Activated CD4-positive, alpha-beta memory T cell treated with anti-CD3 and anti-CD28 coated beads, Interleukin-2, amount 10 ng/mL, durations not matched to agents 7 days and 5 days (primary cell): ENCODE measurements at regions of chr22 and their contacts with region 1.

Region 1: DNA sequence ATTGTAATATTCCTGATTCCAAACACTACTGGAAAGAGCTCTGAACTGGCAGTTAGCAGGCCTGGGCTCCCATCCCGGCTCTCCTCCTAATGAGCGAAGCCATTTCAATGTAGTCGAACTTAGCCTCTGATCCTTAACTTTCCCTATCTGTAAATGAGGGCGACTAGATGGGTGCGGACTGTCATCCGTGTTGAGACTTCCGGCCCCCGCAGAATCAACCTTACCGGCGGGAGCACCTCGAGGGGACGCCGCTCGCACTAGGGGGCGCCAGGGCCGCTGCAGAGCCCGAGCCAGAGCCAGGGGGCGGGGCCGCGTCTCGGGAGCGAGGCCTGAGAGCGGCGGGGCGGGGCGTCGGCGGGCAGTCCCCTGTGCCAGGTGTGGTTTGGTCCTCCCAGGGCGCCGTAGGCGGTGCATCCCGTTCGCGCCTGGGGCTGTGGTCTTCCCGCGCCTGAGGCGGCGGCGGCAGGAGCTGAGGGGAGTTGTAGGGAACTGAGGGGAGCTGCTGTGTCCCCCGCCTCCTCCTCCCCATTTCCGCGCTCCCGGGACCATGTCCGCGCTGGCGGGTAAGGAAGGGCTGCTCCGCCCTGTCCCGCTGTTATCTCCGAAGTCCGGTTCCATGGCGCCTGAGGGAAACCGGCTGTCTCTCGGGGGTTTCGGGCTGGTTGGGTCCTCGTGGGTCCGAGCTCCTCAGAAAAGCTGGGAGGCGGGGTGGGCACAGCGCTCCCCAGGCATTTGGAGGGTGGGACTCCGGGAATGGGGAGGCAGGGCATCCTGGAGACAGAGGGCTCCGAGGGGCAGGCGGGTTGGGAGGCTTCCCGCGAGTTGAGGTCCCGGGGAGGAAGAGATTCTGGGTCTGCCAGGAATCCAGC is at the start of gene LIMK2:
- DNase-seq: peak; percentile 98
- H3K4me3 Mint-ChIP-seq: peak within 1 kb of the TSS; percentile 82
- H3K27ac Mint-ChIP-seq: peak within 1 kb of the TSS; percentile 87
- H3K4me1 Mint-ChIP-seq: peaks cover 55% of the 10 kb centered on the region
- H3K27me3 Mint-ChIP-seq: no peaks in the 10 kb centered on the region
- total RNA-seq, gene LIMK2: 44.0 to 46.4 TPM

Region 2: DNA sequence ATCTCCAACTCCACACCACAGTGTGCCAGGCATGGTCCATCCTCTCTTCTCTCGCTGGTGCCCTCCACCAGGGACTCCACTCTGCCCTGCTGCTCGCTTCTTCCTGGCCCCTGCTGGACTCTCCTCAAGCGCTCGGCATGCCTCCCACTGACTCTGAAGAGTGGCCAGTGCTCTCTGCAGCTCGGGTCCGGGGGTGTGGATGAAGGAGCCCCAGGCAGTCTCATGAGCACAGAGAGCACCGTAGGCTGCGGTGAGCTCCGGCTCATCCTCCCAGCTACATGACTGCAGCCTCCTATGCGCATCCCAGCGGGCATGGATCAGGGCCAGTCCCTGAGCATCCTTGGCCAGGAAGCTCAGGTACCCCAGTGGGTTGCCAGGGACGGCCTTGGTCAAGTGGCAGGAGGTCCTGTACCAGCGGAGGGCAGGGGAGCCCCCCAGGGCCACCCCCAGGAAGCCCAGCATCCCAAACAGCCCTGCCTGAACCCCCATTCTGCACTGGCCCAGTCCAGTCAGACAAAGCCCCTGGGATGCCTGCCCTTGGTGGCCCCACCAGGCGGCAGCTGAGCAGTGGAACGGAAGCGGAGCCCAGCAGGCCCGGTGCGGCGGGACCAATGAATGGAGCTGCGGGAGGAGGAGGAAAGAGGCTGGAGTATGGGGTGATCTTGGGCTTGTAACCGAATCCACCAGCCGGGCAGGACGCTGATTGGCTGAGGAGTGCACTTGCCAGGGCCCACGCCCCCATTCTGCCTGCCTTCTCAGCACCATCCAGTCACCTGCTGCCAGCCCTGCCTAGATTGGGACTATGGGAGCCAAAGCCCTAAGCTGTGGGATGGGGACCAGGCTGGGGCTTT is 72.0 kb before region 1 on chr22 and contains the start of gene PLA2G3:
- CTCF ChIA-PET with region 1: no interaction called
- POLR2A ChIA-PET with region 1: no interaction called
- DNase-seq: no peak
- H3K4me3 Mint-ChIP-seq: no peak within 1 kb of the TSS
- H3K27ac Mint-ChIP-seq: no peak within 1 kb of the TSS
- H3K4me1 Mint-ChIP-seq: peaks cover 7% of the 10 kb centered on the region
- H3K27me3 Mint-ChIP-seq: peaks cover 3% of the 10 kb centered on the region
- total RNA-seq, gene PLA2G3: not detected

Region 3: GRCh38 chr22:31160328-31160978 is 51.6 kb before region 1 on chr22:
- CTCF ChIA-PET with region 1: interaction called, 27 read pairs
- POLR2A ChIA-PET with region 1: interaction called, 33 read pairs
- DNase-seq: peak; percentile 26
- H3K4me3 Mint-ChIP-seq: peak overlapping the region; percentile 100
- H3K27ac Mint-ChIP-seq: peak overlapping the region; percentile 96
- H3K4me1 Mint-ChIP-seq: peaks cover 34% of the 10 kb centered on the region
- H3K27me3 Mint-ChIP-seq: peaks cover 2% of the 10 kb centered on the region

Region 4: DNA sequence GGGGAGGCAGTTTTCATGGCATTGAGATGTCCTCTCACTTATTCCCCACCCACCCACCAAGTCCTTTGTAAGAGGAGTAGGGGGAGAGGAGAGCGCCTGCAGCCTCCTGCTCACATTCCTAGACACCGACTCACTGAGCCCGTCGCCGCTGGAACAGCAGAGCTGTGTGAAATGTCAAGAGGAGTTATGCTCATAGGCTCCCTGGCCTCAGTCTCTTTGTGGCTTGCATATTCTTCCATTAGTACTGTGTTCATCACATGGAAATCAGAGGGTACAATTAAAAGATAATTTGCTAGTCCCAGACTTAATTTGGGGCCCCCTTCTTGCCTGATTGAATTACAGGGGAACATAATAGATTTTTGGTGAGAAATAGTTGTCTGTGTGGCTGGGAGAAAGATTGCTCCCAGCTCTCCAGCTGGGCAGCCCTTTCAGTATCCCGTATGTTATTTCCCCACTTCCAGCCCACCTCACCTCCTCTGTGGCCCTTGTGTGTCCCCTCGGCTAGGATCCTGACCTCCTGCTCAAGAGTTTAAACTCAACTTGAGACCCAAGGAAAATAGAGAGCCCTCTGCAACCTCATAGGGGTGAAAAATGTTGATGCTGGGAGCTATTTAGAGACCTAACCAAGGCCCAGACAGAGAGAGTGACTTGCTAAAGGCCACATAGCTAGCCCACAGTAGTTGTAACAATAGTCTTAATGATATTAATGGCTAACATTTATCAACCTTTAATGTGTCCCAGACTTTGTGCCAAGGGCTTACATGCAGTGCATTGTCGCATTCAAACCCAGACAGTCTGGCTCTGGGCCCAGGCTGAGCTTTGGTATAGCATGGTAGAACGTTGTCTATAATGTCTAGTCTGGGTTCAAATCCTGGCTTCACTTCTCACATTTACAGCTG is 32.2 kb after region 1 on chr22:
- CTCF ChIA-PET with region 1: interaction called, 12 read pairs
- POLR2A ChIA-PET with region 1: interaction called, 5 read pairs
- DNase-seq: no peak
- H3K4me3 Mint-ChIP-seq: no peak overlapping the region
- H3K27ac Mint-ChIP-seq: no peak overlapping the region
- H3K4me1 Mint-ChIP-seq: peaks cover 42% of the 10 kb centered on the region
- H3K27me3 Mint-ChIP-seq: no peaks in the 10 kb centered on the region

Region 5: DNA sequence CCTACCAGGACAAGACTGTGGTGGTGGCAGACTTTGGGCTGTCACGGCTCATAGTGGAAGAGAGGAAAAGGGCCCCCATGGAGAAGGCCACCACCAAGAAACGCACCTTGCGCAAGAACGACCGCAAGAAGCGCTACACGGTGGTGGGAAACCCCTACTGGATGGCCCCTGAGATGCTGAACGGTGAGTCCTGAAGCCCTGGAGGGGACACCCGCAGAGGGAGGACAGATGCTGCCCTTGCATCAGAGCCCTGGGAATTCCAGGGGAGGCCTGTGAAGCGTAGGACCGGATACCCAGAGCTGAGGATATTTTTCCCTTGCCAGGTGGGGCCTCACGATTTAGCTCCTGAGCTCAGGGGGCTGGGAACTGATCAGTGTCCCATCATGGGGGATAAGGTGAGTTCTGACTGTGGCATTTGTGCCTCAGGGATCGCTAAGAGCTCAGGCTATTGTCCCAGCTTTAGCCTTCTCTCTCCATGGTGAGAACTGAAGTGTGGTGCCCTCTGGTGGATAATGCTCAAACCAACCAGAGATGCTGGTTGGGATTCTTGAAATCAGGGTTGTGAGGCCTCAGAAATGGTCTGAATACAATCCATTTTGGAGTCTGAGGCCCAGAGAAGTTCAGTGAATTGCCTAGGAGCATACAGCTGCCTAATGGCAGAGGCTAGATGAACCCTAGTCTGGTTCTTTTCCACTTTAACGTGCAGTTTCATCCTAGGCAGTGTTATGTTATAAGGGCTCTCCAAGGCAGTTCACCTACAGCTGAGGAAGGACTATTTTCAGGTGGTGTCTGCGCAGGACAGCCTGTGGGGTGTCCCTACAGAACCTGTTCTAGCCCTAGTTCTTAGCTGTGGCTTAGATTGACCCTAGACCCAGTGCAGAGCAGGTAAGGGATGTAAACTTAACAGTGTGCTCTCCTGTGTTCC is 60.7 kb after region 1 on chr22:
- CTCF ChIA-PET with region 1: interaction called, 39 read pairs
- POLR2A ChIA-PET with region 1: interaction called, 6 read pairs
- DNase-seq: peak; percentile 51
- H3K4me3 Mint-ChIP-seq: no peak overlapping the region
- H3K27ac Mint-ChIP-seq: no peak overlapping the region
- H3K4me1 Mint-ChIP-seq: peaks cover 5% of the 10 kb centered on the region
- H3K27me3 Mint-ChIP-seq: no peaks in the 10 kb centered on the region

Region 6: GRCh38 chr22:31345331-31346254 is 133.5 kb after region 1 on chr22:
- CTCF ChIA-PET with region 1: interaction called, 3 read pairs
- POLR2A ChIA-PET with region 1: interaction called, 18 read pairs
- DNase-seq: peak; percentile 88
- H3K4me3 Mint-ChIP-seq: peak overlapping the region; percentile 81
- H3K27ac Mint-ChIP-seq: peak overlapping the region; percentile 74
- H3K4me1 Mint-ChIP-seq: peaks cover 49% of the 10 kb centered on the region
- H3K27me3 Mint-ChIP-seq: no peaks in the 10 kb centered on the region